CD8-positive, alpha-beta memory T cell (primary cell): ENCODE measurements at regions of chr14 and their contacts with region 1.

Region 1: GRCh38 chr14:74905375-74906142 is 17.5 kb downstream of the RPS6KL1 start:
- DNase-seq: peak; percentile 61 to 85 (median 71)
- H3K4me3 ChIP-seq: no peak overlapping the region
- H3K4me3 Mint-ChIP-seq: no peak overlapping the region
- H3K27ac ChIP-seq: no peak overlapping the region
- H3K27ac Mint-ChIP-seq: peak overlapping the region; percentile 19 to 90 (median 73)
- H3K4me1 ChIP-seq: no peaks in the 10 kb centered on the region
- H3K4me1 Mint-ChIP-seq: peaks cover 5 to 9% (median 8%) of the 10 kb centered on the region in 3 donors
- H3K27me3 ChIP-seq: no peaks in the 10 kb centered on the region
- H3K27me3 Mint-ChIP-seq: no peaks in the 10 kb centered on the region

Region 2: GRCh38 chr14:74867673-74868072 is 37.9 kb before region 1 on chr14:
- CTCF ChIA-PET with region 1: interaction called, 334 read pairs
- POLR2A ChIA-PET with region 1: no interaction called
- DNase-seq: peak; percentile 17 to 73 (median 36)
- H3K4me3 ChIP-seq: peak overlapping the region; percentile 43
- H3K4me3 Mint-ChIP-seq: peak overlapping the region in 6 of 7 donors; percentile 0 to 73 (median 57)
- H3K27ac ChIP-seq: no peak overlapping the region
- H3K27ac Mint-ChIP-seq: peak overlapping the region; percentile 47 to 92 (median 64)
- H3K4me1 ChIP-seq: peaks cover 15% of the 10 kb centered on the region
- H3K4me1 Mint-ChIP-seq: peaks cover 22 to 27% (median 24%) of the 10 kb centered on the region in 3 donors
- H3K27me3 ChIP-seq: no peaks in the 10 kb centered on the region
- H3K27me3 Mint-ChIP-seq: no peaks in the 10 kb centered on the region

Region 3: DNA sequence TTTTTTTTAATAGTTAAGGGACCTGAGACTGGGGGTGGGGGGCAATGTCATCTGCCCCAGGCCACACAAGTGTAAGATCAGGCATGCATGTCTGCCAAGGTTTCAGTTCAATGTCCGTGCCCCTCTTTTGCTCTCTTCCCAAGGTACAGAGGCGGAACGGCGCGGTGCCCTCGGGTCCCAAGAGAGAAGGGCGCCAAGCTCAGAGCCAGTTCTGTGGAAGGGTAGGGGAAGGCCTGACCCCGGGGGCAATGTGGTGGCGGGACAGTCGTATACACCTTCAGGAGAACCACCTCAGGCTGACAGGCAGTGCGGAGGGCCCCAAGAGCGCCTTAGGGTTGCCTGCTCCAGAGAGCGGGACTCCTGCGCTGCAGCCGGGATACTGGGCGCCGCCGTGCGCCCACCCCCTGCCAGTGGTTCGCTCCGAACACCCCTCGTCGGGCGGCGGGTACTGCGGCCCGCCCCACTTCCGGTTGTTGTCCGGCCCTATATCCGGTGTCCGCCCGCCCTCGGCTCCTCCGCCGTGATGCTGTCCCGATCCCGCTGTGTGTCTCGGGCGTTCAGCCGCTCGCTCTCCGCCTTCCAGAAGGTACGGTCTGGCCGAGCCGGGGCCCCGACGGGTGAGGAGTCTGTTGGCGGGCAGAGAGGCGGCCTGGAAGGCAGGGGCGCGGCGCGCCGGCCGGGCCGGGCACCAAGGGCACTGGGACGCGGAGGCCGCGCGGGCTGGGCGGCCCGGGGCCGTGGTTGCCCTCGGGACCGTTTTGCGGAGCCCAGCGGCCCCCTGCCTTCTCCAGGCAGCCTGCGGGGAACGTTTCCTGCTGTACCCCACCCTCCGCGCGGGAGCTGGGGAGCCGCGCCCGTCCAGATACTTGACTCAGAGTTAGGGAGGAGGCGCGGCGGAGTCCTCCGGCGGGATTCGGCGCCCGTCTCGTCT is 23.9 kb before region 1 on chr14 and contains the start of gene DLST:
- CTCF ChIA-PET with region 1: interaction called, 84 read pairs
- POLR2A ChIA-PET with region 1: interaction called, 3 read pairs
- DNase-seq: peak; percentile 76 to 89 (median 81)
- H3K4me3 ChIP-seq: peak within 1 kb of the TSS; percentile 92
- H3K4me3 Mint-ChIP-seq: peak within 1 kb of the TSS; percentile 97 to 100 (median 99)
- H3K27ac ChIP-seq: peak within 1 kb of the TSS; percentile 93
- H3K27ac Mint-ChIP-seq: peak within 1 kb of the TSS; percentile 91 to 100 (median 99)
- H3K4me1 ChIP-seq: peaks cover 38% of the 10 kb centered on the region
- H3K4me1 Mint-ChIP-seq: peaks cover 59 to 76% (median 71%) of the 10 kb centered on the region in 3 donors
- H3K27me3 ChIP-seq: no peaks in the 10 kb centered on the region
- H3K27me3 Mint-ChIP-seq: peaks cover 0 to under 1% of the 10 kb centered on the region in 2 donors
- total RNA-seq, gene DLST: 160 to 161 TPM

Region 4: GRCh38 chr14:74893614-74894091 is 11.9 kb before region 1 on chr14:
- CTCF ChIA-PET with region 1: interaction called, 34 read pairs
- POLR2A ChIA-PET with region 1: no interaction called
- DNase-seq: no peak
- H3K4me3 ChIP-seq: no peak overlapping the region
- H3K4me3 Mint-ChIP-seq: no peak overlapping the region
- H3K27ac ChIP-seq: no peak overlapping the region
- H3K27ac Mint-ChIP-seq: peak overlapping the region in 3 of 8 donors; percentile 47 to 86 (median 69)
- H3K4me1 ChIP-seq: peaks cover 3% of the 10 kb centered on the region
- H3K4me1 Mint-ChIP-seq: peaks cover 7 to 17% (median 8%) of the 10 kb centered on the region in 3 donors
- H3K27me3 ChIP-seq: no peaks in the 10 kb centered on the region
- H3K27me3 Mint-ChIP-seq: no peaks in the 10 kb centered on the region

Region 5: DNA sequence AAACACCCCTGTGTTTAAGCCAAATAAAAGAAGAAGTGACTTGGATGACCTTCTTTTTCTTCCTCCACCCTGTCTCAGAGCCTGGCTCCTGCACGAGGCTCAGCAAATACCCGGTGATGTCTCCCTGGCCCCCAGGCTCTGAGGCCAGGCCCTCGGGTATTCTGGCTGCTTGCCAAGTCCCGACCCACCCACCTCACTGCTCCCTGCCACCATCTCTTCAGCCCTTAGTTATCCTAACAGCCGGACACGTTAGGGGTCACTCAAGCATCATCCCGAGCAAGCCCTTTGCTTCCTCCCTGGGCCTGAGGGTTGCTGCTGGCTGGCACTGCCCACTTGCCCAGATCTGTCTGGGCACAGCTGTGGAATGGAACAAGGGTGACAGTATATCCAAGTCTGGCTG is 10.3 kb after region 1 on chr14:
- CTCF ChIA-PET with region 1: no interaction called
- POLR2A ChIA-PET with region 1: no interaction called
- DNase-seq: no peak
- H3K4me3 ChIP-seq: no peak overlapping the region
- H3K4me3 Mint-ChIP-seq: no peak overlapping the region
- H3K27ac ChIP-seq: no peak overlapping the region
- H3K27ac Mint-ChIP-seq: no peak overlapping the region
- H3K4me1 ChIP-seq: no peaks in the 10 kb centered on the region
- H3K4me1 Mint-ChIP-seq: no peaks in the 10 kb centered on the region
- H3K27me3 ChIP-seq: no peaks in the 10 kb centered on the region
- H3K27me3 Mint-ChIP-seq: no peaks in the 10 kb centered on the region

Region 6: DNA sequence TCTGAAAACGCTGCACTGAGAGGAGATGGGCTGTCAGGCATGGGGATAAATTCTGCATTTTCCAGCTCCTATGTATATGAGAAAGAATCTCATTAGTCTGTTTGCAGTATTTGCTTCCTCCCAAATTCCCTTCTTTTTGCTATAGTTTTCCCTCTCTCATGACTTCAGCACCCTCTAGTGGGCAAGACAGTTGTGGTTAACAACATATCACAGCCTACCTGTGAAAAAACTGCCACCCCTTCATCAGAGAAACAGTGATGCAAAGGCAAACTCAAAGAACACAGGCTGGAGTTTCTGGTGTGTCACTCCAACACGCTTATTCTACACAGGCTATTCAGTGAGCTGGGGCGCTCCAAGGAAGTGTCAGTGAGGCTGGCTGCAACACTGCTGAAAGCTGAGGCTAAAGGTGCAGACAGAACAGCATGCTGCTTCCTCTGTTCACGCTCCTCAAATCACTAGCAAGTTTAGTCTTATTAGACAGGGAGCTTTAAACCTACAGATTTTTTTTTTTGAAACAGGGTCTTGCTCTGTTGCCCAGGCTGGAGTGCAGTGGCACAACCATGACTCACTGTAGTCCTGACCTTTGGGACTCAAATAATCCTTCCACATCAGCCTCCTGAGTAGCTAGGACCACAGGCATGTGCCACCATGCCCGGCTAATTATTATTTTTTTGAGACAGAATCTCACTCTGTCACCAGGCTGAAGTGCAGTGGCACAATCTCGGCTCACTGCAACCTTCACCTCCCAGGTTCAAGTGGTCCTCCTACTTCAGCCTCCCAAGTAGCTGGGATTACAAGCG is 183.2 kb after region 1 on chr14:
- CTCF ChIA-PET with region 1: interaction called, 14 read pairs
- POLR2A ChIA-PET with region 1: no interaction called
- DNase-seq: peak in 3 of 5 donors; percentile 14 to 34 (median 32)
- H3K4me3 ChIP-seq: no peak overlapping the region
- H3K4me3 Mint-ChIP-seq: no peak overlapping the region
- H3K27ac ChIP-seq: no peak overlapping the region
- H3K27ac Mint-ChIP-seq: no peak overlapping the region
- H3K4me1 ChIP-seq: no peaks in the 10 kb centered on the region
- H3K4me1 Mint-ChIP-seq: no peaks in the 10 kb centered on the region
- H3K27me3 ChIP-seq: no peaks in the 10 kb centered on the region
- H3K27me3 Mint-ChIP-seq: no peaks in the 10 kb centered on the region